ENCODE measurements at regions of chr3 and their contacts with region 1.

Region 1: GRCh38 chr3:141231101-141231935 is at the start of gene PXYLP1:
- DNase-seq: peak; percentile 94
- ATAC-seq: peak; percentile 88
- H3K4me3 Mint-ChIP-seq: peak within 1 kb of the TSS; percentile 77
- H3K27ac Mint-ChIP-seq: 0 out of 2 replicates have a peak within 1 kb of the TSS, but pooled peaks have one; percentile 5
- H3K4me1 Mint-ChIP-seq: peaks cover 52% of the 10 kb centered on the region
- H3K27me3 Mint-ChIP-seq: peaks cover 39% of the 10 kb centered on the region
- CTCF ChIP-seq: peak; percentile 72
- total RNA-seq, gene PXYLP1: 16.9 to 20.1 TPM (median 19.7 TPM) in 3 replicates

Region 2: GRCh38 chr3:141243271-141243707 is 12.0 kb after region 1 on chr3:
- CTCF ChIA-PET with region 1: interaction called, 22 read pairs
- POLR2A ChIA-PET with region 1: interaction called, 3 read pairs
- DNase-seq: no peak
- ATAC-seq: peak; percentile 25; the same call in 1 of the 2 replicates
- H3K4me3 Mint-ChIP-seq: no peak overlapping the region
- H3K27ac Mint-ChIP-seq: no peak overlapping the region
- H3K4me1 Mint-ChIP-seq: peaks cover 25% of the 10 kb centered on the region
- H3K27me3 Mint-ChIP-seq: no peaks in the 10 kb centered on the region
- CTCF ChIP-seq: no peak

Region 3: DNA sequence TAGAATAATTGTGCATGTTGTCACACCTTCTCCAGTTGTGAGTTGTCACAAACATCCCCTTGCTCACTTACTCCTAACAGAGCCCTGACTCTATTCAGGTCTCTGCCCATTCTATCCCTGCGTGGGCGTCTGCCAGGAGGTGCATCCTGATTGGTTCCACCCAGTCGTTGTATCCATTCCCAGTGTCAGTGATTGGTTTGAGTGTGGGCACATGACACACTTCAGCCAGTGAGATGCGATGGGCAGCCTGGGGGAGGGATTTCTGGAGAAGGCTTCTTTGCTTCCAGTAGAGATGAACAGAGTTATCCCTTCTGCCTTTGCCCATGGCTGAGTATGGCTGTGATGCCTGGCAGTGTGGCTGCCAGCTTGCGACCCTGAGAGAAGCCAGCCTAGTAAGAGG is 19.0 kb after region 1 on chr3:
- CTCF ChIA-PET with region 1: interaction called, 74 read pairs
- POLR2A ChIA-PET with region 1: interaction called, 3 read pairs
- DNase-seq: no peak
- ATAC-seq: peak; percentile 79
- H3K4me3 Mint-ChIP-seq: no peak overlapping the region
- H3K27ac Mint-ChIP-seq: no peak overlapping the region
- H3K4me1 Mint-ChIP-seq: no peaks in the 10 kb centered on the region
- H3K27me3 Mint-ChIP-seq: no peaks in the 10 kb centered on the region
- CTCF ChIP-seq: no peak

Region 4: DNA sequence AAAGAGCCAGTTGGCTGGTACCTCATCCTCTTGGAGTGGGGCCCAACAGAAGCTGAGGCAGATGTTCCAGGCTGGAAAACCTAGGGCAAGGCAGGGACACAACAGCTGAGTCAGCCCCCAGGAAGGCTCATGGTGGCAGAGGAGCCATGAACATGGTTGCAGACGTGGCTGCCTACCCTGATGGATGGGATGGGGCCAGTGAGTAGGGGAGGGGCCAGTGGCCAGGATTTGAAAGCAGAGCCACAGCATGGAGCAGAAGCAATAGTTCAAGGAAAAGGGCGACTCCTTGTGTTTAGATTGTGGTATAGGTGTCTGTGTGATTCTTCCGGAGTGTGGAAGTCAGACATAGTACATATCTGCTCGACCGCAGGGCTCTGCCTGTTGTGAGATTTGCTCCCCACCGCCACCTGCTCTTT is 24.5 kb after region 1 on chr3:
- CTCF ChIA-PET with region 1: interaction called, 74 read pairs
- POLR2A ChIA-PET with region 1: interaction called, 3 read pairs
- DNase-seq: peak; percentile 35
- ATAC-seq: peak; percentile 94
- H3K4me3 Mint-ChIP-seq: no peak overlapping the region
- H3K27ac Mint-ChIP-seq: no peak overlapping the region
- H3K4me1 Mint-ChIP-seq: no peaks in the 10 kb centered on the region; the same call in 1 of the 2 replicates
- H3K27me3 Mint-ChIP-seq: no peaks in the 10 kb centered on the region
- CTCF ChIP-seq: no peak

Region 5: DNA sequence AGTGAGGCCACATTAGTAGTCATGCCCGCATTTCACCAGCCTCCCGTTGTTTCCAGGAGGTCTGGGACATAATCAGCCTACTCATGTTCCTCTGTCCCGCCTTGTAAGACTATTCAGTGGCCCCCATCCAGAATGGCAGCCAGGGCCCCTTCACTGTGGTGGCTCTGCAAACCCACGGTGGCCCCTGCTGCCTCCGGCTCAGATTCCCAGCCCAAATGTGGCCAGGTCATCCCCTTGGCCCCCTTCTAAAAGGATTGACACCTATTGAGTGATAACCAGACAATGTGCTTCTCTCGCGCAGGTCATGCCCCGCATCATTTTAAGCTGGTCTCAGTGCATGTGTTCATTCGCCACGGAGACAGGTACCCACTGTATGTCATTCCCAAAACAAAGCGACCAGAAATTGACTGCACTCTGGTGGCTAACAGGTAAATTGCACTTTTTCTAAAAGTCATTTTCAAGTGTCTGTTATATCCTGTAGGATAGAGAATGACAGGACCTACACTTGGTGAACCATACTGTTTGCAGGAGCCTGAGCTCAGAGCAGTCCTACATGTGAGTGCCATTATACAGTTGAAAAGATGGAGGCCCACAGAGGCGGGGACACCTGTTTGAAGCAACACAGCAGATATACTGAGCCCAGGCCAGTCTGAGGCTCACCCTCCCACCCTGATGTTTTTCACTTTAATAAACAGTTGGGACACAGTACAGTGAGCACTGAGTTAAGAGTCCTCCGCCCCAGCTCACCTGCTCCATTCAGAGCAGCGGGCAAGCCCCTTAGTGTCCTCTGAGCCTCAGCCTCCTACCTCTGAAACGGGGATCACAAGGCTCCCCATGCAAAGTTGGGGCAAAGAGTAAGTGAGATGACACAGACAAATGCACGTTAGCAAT is 48.0 kb after region 1 on chr3:
- CTCF ChIA-PET with region 1: interaction called, 17 read pairs
- POLR2A ChIA-PET with region 1: no interaction called
- DNase-seq: no peak
- ATAC-seq: peak; percentile 84
- H3K4me3 Mint-ChIP-seq: no peak overlapping the region
- H3K27ac Mint-ChIP-seq: no peak overlapping the region
- H3K4me1 Mint-ChIP-seq: 0 out of 2 replicates have a peak, but pooled peaks cover 6% of the 10 kb centered on the region
- H3K27me3 Mint-ChIP-seq: no peaks in the 10 kb centered on the region
- CTCF ChIP-seq: peak; percentile 35; the same call in 1 of the 2 replicates

Region 6: GRCh38 chr3:141303481-141304223 is 72.3 kb after region 1 on chr3:
- CTCF ChIA-PET with region 1: interaction called, 37 read pairs
- POLR2A ChIA-PET with region 1: no interaction called
- DNase-seq: peak; percentile 33
- ATAC-seq: peak; percentile 77
- H3K4me3 Mint-ChIP-seq: no peak overlapping the region
- H3K27ac Mint-ChIP-seq: no peak overlapping the region
- H3K4me1 Mint-ChIP-seq: peaks cover 4% of the 10 kb centered on the region
- H3K27me3 Mint-ChIP-seq: peaks cover 28% of the 10 kb centered on the region
- CTCF ChIP-seq: peak; percentile 66

Measured in WTC11 (cell line).